ENCODE measurements at regions of chr13 and their contacts with region 1.

Region 1: GRCh38 chr13:97659602-97660001 is 225.6 kb downstream of the RAP2A start:
- DNase-seq: peak; percentile 21
- ATAC-seq: peak; percentile 71
- H3K4me3 ChIP-seq: no peak overlapping the region
- H3K27ac ChIP-seq: no peak overlapping the region
- H3K4me1 ChIP-seq: no peaks in the 10 kb centered on the region
- H3K27me3 ChIP-seq: peaks cover 20% of the 10 kb centered on the region
- CTCF ChIP-seq: peak; percentile 41
- POLR2A ChIP-seq: no peak
- RAD21 ChIP-seq: peak; percentile 52

Region 2: DNA sequence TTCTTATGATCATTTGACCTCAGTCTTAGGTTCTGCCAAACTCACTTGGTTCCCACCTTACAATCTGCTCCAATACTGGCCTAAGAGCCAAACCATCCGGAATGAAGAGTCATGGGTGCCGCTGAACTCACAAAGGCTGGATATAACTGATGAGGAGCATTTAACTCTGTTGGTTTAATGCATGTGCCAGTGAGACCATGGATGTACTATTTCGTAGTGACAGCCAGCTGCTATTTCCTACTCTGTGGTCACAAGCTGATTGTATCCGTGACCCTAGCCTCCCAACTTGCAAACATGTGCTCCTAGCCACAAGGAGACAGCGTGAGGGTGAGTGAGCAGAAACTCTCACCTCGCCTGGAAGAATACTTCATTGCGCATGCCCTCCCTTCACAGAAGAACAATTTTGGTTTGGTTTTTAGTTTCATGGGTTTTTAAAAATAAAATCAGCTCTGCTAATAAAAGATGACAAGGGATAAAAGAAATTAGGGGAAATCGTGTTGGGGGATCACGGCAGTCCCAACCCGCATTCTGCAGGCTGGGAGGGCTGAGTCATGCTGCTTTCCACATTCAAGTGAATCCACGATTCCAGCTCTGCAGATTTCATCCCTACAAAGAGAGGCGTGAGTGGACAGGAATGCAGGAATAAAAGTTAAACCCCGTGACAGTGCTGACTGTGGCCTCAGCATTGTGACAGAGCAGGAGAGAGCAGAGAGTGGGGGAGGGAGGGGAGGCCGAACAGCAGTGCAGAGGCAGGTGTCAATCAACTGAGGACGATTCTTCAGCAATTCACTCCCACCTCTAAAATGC is 292.4 kb before region 1 on chr13:
- CTCF ChIA-PET with region 1: no interaction called
- POLR2A ChIA-PET with region 1: no interaction called
- dilution Hi-C with region 1: no loop called
- in situ Hi-C with region 1: no loop called
- intact Hi-C with region 1: loop called (anchors 5 kb)
- DNase-seq: peak; percentile 78
- ATAC-seq: peak; percentile 82
- H3K4me3 ChIP-seq: no peak overlapping the region
- H3K27ac ChIP-seq: peak overlapping the region; percentile 75
- H3K4me1 ChIP-seq: peaks cover 9% of the 10 kb centered on the region
- H3K27me3 ChIP-seq: no peaks in the 10 kb centered on the region
- CTCF ChIP-seq: no peak
- POLR2A ChIP-seq: no peak
- RAD21 ChIP-seq: no peak

Region 3: GRCh38 chr13:97879646-97880310 is 220.2 kb after region 1 on chr13:
- CTCF ChIA-PET with region 1: no interaction called
- POLR2A ChIA-PET with region 1: no interaction called
- dilution Hi-C with region 1: no loop called
- in situ Hi-C with region 1: no loop called
- intact Hi-C with region 1: no loop called
- DNase-seq: peak; percentile 91
- ATAC-seq: peak; percentile 90
- H3K4me3 ChIP-seq: no peak overlapping the region
- H3K27ac ChIP-seq: peak overlapping the region; percentile 98
- H3K4me1 ChIP-seq: peaks cover 18% of the 10 kb centered on the region
- H3K27me3 ChIP-seq: no peaks in the 10 kb centered on the region
- CTCF ChIP-seq: no peak
- POLR2A ChIP-seq: no peak
- RAD21 ChIP-seq: no peak; the same call in 1 of the 2 replicates

Measured in IMR-90 (cell line).